ENCODE measurements at regions of chr2 and their contacts with region 1.

Region 1: DNA sequence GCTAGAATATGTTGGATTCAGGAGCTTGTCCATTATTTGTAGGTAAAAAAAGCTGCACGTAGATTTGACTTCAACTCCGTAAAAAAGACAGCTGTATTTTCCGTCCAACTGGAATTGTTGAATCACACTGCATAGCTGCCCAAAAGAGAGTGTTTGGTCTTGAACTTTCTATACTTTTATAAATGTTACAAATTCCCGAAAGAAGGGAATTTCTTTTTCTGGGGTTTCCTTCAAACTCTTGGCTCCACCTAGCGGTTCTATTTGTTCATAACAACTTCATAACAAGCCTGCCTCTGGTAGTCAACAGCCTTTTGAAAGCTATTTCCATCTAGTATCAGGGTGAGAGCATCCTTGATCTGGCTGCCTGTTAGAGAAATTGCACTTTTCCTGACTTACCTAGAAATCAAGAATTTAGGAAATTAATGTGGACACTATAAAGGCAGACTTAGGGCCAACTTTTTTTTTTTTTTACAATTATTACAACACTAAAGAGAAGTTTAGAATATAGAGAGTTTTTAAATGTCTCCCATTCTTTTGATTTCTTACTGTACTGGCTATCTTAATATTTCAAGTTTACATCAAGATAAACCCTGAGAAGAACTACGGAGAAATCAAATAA is 48.1 kb downstream of the TMEM185B start:
- DNase-seq: no peak
- H3K4me3 Mint-ChIP-seq: no peak overlapping the region
- H3K27ac Mint-ChIP-seq: no peak overlapping the region
- H3K4me1 Mint-ChIP-seq: peaks cover 42% of the 10 kb centered on the region
- H3K27me3 Mint-ChIP-seq: peaks cover 2% of the 10 kb centered on the region

Region 2: GRCh38 chr2:119678998-119679710 is 495.9 kb before region 1 on chr2 and contains the start of gene TMEM177:
- intact Hi-C with region 1: loop called (anchors 1 kb)
- DNase-seq: peak; percentile 89
- H3K4me3 Mint-ChIP-seq: peak within 1 kb of the TSS; percentile 88
- H3K27ac Mint-ChIP-seq: peak within 1 kb of the TSS; percentile 79
- H3K4me1 Mint-ChIP-seq: peaks cover 18% of the 10 kb centered on the region
- H3K27me3 Mint-ChIP-seq: peaks cover 3% of the 10 kb centered on the region
- total RNA-seq, gene TMEM177: 16.9 and 17.0 TPM in 2 replicates

Region 3: GRCh38 chr2:119753041-119753929 is 421.8 kb before region 1 on chr2:
- intact Hi-C with region 1: loop called (anchors 1 kb)
- DNase-seq: no peak
- H3K4me3 Mint-ChIP-seq: no peak overlapping the region
- H3K27ac Mint-ChIP-seq: no peak overlapping the region
- H3K4me1 Mint-ChIP-seq: peaks cover 13% of the 10 kb centered on the region
- H3K27me3 Mint-ChIP-seq: peaks cover 10% of the 10 kb centered on the region

Region 4: DNA sequence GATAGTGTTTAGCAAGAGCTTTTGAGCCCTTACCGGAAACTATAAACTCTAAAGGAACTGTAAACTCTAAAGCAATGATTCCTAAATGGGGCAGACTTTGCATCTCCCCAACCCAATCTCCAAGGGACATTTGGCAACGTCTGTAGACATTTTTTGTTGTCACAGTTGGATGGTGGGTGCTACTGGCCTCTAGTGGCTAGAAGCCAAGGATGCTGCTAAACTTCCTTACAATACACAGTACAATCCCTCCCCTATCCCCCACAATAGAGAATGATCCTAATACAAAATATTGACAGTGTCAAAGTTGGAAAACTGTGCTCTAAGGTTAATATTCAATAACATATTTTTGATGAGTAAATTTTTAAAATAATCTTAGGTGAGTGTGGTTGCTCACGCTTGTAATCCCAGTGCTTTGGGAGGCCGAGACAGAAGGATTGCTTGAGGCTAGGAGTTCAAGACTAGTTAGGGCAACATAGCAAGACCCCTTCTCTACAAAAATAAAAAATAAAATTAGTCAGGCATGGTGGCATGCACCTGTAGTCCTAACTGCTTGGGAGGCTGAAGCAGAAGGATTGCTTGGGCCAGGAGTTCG is 348.6 kb before region 1 on chr2:
- intact Hi-C with region 1: loop called (anchors 5 kb)
- DNase-seq: no peak
- H3K4me3 Mint-ChIP-seq: no peak overlapping the region
- H3K27ac Mint-ChIP-seq: no peak overlapping the region
- H3K4me1 Mint-ChIP-seq: peaks cover 22% of the 10 kb centered on the region
- H3K27me3 Mint-ChIP-seq: no peaks in the 10 kb centered on the region

Region 5: DNA sequence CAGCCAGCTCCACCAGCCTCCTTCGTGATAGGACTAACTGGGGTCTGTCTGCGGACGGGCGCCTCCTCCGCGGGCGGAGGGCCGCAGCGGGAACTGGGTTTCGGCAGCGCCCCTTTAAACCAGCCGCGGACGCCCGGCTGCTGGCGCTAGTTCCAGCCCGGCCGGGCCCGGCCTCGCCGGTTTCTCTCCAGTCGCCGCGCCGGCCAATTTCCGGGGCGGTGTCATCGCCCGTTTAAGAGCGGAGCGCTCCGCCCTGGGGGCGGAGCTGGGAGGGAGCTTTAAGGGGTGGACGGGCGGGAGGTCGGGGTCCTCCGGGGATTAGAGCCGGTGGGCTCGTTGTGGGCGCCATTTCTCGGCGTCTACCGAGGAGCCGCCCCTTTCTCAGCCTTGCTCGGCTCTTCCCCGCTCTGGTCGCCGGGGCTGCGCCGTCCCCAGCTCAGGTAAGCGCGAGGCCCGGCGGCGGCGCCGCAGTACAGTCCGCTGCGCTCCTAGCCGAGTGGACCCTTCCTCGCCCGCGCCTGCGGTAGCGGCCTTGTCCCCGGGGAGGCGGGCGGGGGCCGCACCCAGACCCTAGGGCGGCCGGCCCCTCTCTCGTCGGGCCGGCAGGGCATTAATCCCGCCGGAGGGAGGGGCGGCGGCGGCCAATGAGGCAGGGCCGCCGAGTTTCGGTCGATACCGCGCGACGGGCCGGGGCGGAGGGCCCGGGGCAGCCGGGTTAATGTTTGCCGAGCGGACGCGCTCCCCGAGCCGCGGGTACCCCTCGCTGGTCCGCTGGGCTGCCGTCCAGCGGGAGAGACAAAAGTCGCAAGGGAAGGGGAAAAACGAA is 162.1 kb before region 1 on chr2 and contains the start of gene EPB41L5:
- intact Hi-C with region 1: loop called (anchors 2 kb)
- DNase-seq: peak; percentile 72
- H3K4me3 Mint-ChIP-seq: peak within 1 kb of the TSS; percentile 67
- H3K27ac Mint-ChIP-seq: no peak within 1 kb of the TSS
- H3K4me1 Mint-ChIP-seq: peaks cover 10% of the 10 kb centered on the region
- H3K27me3 Mint-ChIP-seq: peaks cover 27% of the 10 kb centered on the region
- total RNA-seq, gene EPB41L5: 0.94 and 1.5 TPM in 2 replicates

Region 6: DNA sequence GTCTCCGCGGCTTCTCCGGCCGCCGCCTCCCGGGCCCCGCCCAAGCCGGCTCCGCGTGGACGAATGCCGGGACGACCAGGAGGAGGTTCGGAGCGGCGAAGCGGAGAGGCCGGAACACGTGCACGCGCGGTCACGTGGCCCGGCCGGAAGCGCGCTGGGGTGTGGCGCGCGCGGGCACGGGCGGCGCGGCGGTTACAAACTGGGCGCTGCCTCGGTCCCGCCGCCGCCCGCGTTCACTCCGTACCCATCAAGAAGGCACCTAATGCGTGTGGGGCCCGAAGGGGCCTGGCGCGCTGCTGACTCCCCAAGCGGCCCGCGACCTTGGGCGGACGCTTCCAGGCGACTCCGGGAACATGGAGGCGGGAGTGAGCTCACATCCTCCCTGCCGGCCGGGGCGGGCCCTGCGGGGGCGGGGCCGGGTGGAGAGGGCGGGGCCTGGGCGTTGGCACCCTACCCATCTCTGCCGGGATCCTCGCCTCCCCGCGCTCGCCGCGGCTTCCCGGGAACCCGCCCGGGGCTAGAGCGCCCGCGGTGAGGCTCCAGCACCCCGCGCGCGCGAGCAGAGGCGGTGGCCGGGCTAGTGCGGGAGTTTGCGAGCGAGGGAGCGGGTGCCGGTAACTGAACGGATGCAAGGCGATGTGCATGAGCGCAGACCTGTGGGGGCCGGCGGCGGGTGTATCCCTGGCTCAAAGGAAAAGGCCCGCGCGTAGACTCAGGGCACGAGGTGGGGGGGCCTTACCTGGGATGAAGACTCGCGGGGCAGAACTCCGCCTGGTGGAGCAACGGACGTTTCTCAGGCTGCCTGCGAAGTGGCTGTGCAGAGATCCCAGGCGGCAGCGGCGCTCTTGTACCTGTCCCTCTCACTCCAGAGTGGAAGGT is 48.2 kb after region 1 on chr2 and contains the start of gene TMEM185B:
- intact Hi-C with region 1: loop called (anchors 2 kb)
- DNase-seq: peak; percentile 88
- H3K4me3 Mint-ChIP-seq: peak within 1 kb of the TSS; percentile 82
- H3K27ac Mint-ChIP-seq: peak within 1 kb of the TSS; percentile 84
- H3K4me1 Mint-ChIP-seq: peaks cover 57% of the 10 kb centered on the region
- H3K27me3 Mint-ChIP-seq: no peaks in the 10 kb centered on the region
- total RNA-seq, gene TMEM185B: 38.7 and 39.3 TPM in 2 replicates

Region 7: DNA sequence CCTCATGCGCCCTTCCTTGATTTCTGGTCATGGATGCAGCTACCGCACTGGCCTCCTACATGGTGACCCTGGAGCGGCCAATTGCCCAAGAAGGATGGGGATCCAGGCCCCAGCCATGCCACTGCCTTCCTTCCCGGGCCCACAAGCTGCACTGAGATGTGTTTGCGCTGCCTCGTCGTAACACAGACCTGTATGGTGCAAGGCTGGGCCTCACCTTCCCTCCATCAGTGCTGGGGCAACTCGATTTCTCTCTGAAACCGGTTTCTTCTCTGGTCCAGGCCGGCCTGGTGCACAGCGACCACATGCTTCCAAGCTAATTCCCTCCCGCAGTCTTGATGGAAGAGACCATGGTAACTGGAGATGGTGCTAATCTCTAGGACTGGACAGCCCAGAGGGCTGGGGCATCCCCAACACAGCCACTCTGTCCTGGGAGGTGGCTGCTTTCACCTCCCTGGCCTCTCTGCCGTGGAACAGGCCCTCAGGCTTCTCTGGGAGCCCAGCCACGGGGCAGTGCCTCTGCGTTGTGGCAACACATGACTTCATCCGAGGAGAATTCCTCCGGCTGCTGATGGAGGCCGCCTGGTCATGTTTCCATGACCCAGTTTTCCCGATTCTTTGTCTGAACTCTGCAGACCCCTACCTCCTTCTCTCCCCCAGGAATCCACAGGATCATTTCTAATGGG is 744.8 kb after region 1 on chr2:
- intact Hi-C with region 1: no loop called
- DNase-seq: no peak
- H3K4me3 Mint-ChIP-seq: no peak overlapping the region
- H3K27ac Mint-ChIP-seq: no peak overlapping the region
- H3K4me1 Mint-ChIP-seq: no peaks in the 10 kb centered on the region
- H3K27me3 Mint-ChIP-seq: no peaks in the 10 kb centered on the region

Measured in activated T-helper 2 cell treated with anti-CD3 and anti-CD28 coated beads, Interferon-gamma antibody, Interleukin-2, Interleukin-4, amounts not matched to agents 10 μg/mL and 5 μg/mL and 100 μg/mL, durations not matched to agents 14 hours and 24 hours and 36 hours (primary cell).